ENCODE measurements at regions of chr12 and their contacts with region 1.

Region 1: GRCh38 chr12:27940756-27941402 is 31.7 kb downstream of the PTHLH start:
- DNase-seq: peak; percentile 87
- H3K4me3 ChIP-seq: no peak overlapping the region
- H3K27ac ChIP-seq: no peak overlapping the region
- H3K4me1 ChIP-seq: no peaks in the 10 kb centered on the region
- H3K27me3 ChIP-seq: no peaks in the 10 kb centered on the region
- CTCF ChIP-seq: peak; percentile 74 to 82
- POLR2A ChIP-seq: no peak

Region 2: GRCh38 chr12:27733052-27733656 is 207.7 kb before region 1 on chr12:
- CTCF ChIA-PET with region 1: interaction called, 141 read pairs
- POLR2A ChIA-PET with region 1: no interaction called
- dilution Hi-C with region 1: no loop called
- intact Hi-C with region 1: loop called (anchors 1 kb)
- DNase-seq: peak; percentile 51
- H3K4me3 ChIP-seq: no peak overlapping the region
- H3K27ac ChIP-seq: no peak overlapping the region
- H3K4me1 ChIP-seq: no peaks in the 10 kb centered on the region
- H3K27me3 ChIP-seq: no peaks in the 10 kb centered on the region
- CTCF ChIP-seq: peak; percentile 72 to 76
- POLR2A ChIP-seq: no peak

Region 3: GRCh38 chr12:27840244-27840999 is 100.5 kb before region 1 on chr12:
- CTCF ChIA-PET with region 1: interaction called, 15 read pairs
- POLR2A ChIA-PET with region 1: no interaction called
- dilution Hi-C with region 1: no loop called
- intact Hi-C with region 1: no loop called
- DNase-seq: peak; percentile 33
- H3K4me3 ChIP-seq: no peak overlapping the region
- H3K27ac ChIP-seq: no peak overlapping the region
- H3K4me1 ChIP-seq: peaks cover 12% of the 10 kb centered on the region
- H3K27me3 ChIP-seq: peaks cover 0 to 1% of the 10 kb centered on the region in 2 experiments
- CTCF ChIP-seq: peak; percentile 6 to 37
- POLR2A ChIP-seq: no peak

Region 4: DNA sequence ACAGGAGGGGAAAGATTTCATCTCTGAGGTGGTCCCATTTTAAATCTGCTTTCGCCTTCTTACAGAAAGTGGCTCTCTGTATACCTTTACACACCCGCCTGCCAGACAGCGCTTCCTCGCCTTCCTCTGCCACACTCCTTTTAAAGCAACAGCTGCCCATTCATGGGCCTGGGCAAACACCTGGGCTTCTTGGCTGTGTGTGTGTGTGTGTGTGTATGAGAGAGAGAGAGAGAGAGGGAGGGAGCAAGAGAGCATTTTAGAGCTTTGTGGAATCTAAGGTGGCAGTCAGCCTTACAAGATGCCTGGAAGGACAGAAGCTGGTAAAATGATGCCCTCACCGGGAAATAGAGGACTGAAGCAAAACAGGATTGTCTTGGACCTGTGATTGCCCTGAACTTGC is 11.6 kb after region 1 on chr12:
- CTCF ChIA-PET with region 1: interaction called, 18 read pairs
- POLR2A ChIA-PET with region 1: no interaction called
- dilution Hi-C with region 1: no loop called
- intact Hi-C with region 1: no loop called
- DNase-seq: no peak
- H3K4me3 ChIP-seq: no peak overlapping the region
- H3K27ac ChIP-seq: no peak overlapping the region
- H3K4me1 ChIP-seq: no peaks in the 10 kb centered on the region
- H3K27me3 ChIP-seq: no peaks in the 10 kb centered on the region
- CTCF ChIP-seq: no peak
- POLR2A ChIP-seq: no peak

Region 5: GRCh38 chr12:28172434-28173030 is 231.7 kb after region 1 on chr12:
- CTCF ChIA-PET with region 1: interaction called, 16 read pairs
- POLR2A ChIA-PET with region 1: no interaction called
- dilution Hi-C with region 1: no loop called
- intact Hi-C with region 1: loop called (anchors 1 kb)
- DNase-seq: peak; percentile 73
- H3K4me3 ChIP-seq: no peak overlapping the region
- H3K27ac ChIP-seq: no peak overlapping the region
- H3K4me1 ChIP-seq: no peaks in the 10 kb centered on the region
- H3K27me3 ChIP-seq: no peaks in the 10 kb centered on the region
- CTCF ChIP-seq: peak; percentile 56 to 62
- POLR2A ChIP-seq: no peak

Region 6: GRCh38 chr12:28872654-28873268 is 931.9 kb after region 1 on chr12:
- CTCF ChIA-PET with region 1: interaction called, 4 read pairs
- POLR2A ChIA-PET with region 1: no interaction called
- dilution Hi-C with region 1: no loop called
- intact Hi-C with region 1: loop called (anchors 2 kb)
- DNase-seq: peak; percentile 70
- H3K4me3 ChIP-seq: no peak overlapping the region
- H3K27ac ChIP-seq: no peak overlapping the region
- H3K4me1 ChIP-seq: no peaks in the 10 kb centered on the region
- H3K27me3 ChIP-seq: no peaks in the 10 kb centered on the region
- CTCF ChIP-seq: peak; percentile 69 to 74
- POLR2A ChIP-seq: no peak